Naive thymus-derived CD4-positive, alpha-beta T cell (primary cell): ENCODE measurements at regions of chr14 and their contacts with region 1.

Region 1: GRCh38 chr14:68816262-68816942 is 23.5 kb upstream of the ZFP36L1 start:
- DNase-seq: peak; percentile 77 to 93 (median 87)
- ATAC-seq: peak; percentile 92
- H3K4me3 ChIP-seq: peak overlapping the region; percentile 63
- H3K4me3 Mint-ChIP-seq: peak overlapping the region; percentile 82 to 95 (median 86)
- H3K27ac ChIP-seq: peak overlapping the region; percentile 95
- H3K27ac Mint-ChIP-seq: peak overlapping the region; percentile 93 to 100 (median 96)
- H3K4me1 ChIP-seq: peaks cover 59 to 62% of the 10 kb centered on the region in 2 donors
- H3K4me1 Mint-ChIP-seq: peaks cover 48 to 89% (median 66%) of the 10 kb centered on the region in 7 donors
- H3K27me3 ChIP-seq: no peaks in the 10 kb centered on the region
- H3K27me3 Mint-ChIP-seq: no peaks in the 10 kb centered on the region

Region 2: GRCh38 chr14:67816326-67817002 is 999.9 kb before region 1 on chr14 and contains the start of gene ZFYVE26:
- CTCF ChIA-PET with region 1: no interaction called
- POLR2A ChIA-PET with region 1: no interaction called
- intact Hi-C with region 1: loop called (anchors 5 kb)
- DNase-seq: peak; percentile 55 to 93 (median 87)
- ATAC-seq: peak; percentile 96
- H3K4me3 ChIP-seq: peak within 1 kb of the TSS; percentile 91
- H3K4me3 Mint-ChIP-seq: peak within 1 kb of the TSS; percentile 87 to 99 (median 98)
- H3K27ac ChIP-seq: peak within 1 kb of the TSS; percentile 76
- H3K27ac Mint-ChIP-seq: peak within 1 kb of the TSS; percentile 91 to 99 (median 98)
- H3K4me1 ChIP-seq: peaks cover 11 to 15% of the 10 kb centered on the region in 2 donors
- H3K4me1 Mint-ChIP-seq: peaks cover 24 to 73% (median 65%) of the 10 kb centered on the region in 7 donors
- H3K27me3 ChIP-seq: no peaks in the 10 kb centered on the region
- H3K27me3 Mint-ChIP-seq: no peaks in the 10 kb centered on the region
- total RNA-seq, gene ZFYVE26: 25.0 to 38.9 (median 31.1) TPM

Region 3: GRCh38 chr14:67943947-67944346 is 872.5 kb before region 1 on chr14:
- CTCF ChIA-PET with region 1: no interaction called
- POLR2A ChIA-PET with region 1: no interaction called
- intact Hi-C with region 1: loop called (anchors 1 kb)
- DNase-seq: peak in 7 of 9 donors; percentile 22 to 57 (median 49)
- ATAC-seq: peak; percentile 80
- H3K4me3 ChIP-seq: no peak overlapping the region
- H3K4me3 Mint-ChIP-seq: no peak overlapping the region
- H3K27ac ChIP-seq: no peak overlapping the region
- H3K27ac Mint-ChIP-seq: no peak overlapping the region
- H3K4me1 ChIP-seq: no peaks in the 10 kb centered on the region
- H3K4me1 Mint-ChIP-seq: peaks cover 0 to 2% (median 0%) of the 10 kb centered on the region in 7 donors
- H3K27me3 ChIP-seq: no peaks in the 10 kb centered on the region
- H3K27me3 Mint-ChIP-seq: no peaks in the 10 kb centered on the region

Region 4: DNA sequence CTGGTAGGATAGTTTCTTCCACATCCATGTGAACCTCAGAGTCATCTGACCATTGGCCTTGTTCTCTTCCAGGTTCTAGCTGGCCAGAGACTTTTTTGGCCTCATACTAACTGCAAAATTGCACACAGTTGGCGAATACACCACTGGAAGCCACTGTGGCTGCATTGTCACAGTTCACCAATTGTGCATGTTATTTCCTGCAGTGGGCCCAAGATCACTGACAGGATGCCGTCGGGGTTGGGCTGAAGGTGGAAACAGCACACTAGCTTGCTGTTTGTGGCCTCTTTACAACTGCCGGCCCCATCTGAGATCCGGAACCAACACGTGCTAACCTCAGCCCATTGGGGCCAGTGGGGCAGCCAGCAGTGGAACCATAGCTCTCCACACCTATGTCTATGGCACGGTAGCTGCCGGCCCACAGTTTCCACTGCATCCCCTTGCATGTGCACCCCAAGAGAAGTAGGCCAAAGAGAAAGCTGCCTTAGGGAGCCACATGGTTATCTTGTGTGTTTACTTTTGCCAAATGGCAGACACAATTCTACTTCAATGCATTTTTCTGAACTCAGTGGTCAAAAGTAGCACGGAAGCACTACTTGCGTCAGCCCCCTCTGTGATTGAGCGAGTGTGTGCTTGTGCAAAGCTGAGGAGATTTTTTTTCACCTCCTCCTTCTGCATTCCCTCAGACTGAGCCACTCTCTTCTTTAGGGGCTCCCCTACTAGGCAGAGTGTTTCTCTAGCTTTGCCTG is 532.9 kb before region 1 on chr14:
- CTCF ChIA-PET with region 1: interaction called, 7 read pairs
- POLR2A ChIA-PET with region 1: interaction called, 12 read pairs
- intact Hi-C with region 1: loop called (anchors 1 kb)
- DNase-seq: peak; percentile 20 to 70 (median 62)
- ATAC-seq: peak; percentile 78
- H3K4me3 ChIP-seq: peak overlapping the region; percentile 14
- H3K4me3 Mint-ChIP-seq: peak overlapping the region; percentile 44 to 86 (median 72)
- H3K27ac ChIP-seq: peak overlapping the region; percentile 74
- H3K27ac Mint-ChIP-seq: peak overlapping the region; percentile 93 to 99 (median 97)
- H3K4me1 ChIP-seq: peaks cover 36 to 70% of the 10 kb centered on the region in 2 donors
- H3K4me1 Mint-ChIP-seq: peaks cover 44 to 96% (median 86%) of the 10 kb centered on the region in 7 donors
- H3K27me3 ChIP-seq: no peaks in the 10 kb centered on the region
- H3K27me3 Mint-ChIP-seq: no peaks in the 10 kb centered on the region

Region 5: GRCh38 chr14:68418174-68419118 is 398.0 kb before region 1 on chr14:
- CTCF ChIA-PET with region 1: no interaction called
- POLR2A ChIA-PET with region 1: no interaction called
- intact Hi-C with region 1: no loop called
- DNase-seq: no peak
- ATAC-seq: no peak
- H3K4me3 ChIP-seq: no peak overlapping the region
- H3K4me3 Mint-ChIP-seq: no peak overlapping the region
- H3K27ac ChIP-seq: no peak overlapping the region
- H3K27ac Mint-ChIP-seq: no peak overlapping the region
- H3K4me1 ChIP-seq: peaks cover 0 to 9% of the 10 kb centered on the region in 2 donors
- H3K4me1 Mint-ChIP-seq: peaks cover 9 to 32% (median 19%) of the 10 kb centered on the region in 7 donors
- H3K27me3 ChIP-seq: no peaks in the 10 kb centered on the region
- H3K27me3 Mint-ChIP-seq: no peaks in the 10 kb centered on the region

Region 6: GRCh38 chr14:68506021-68506644 is 310.3 kb before region 1 on chr14:
- CTCF ChIA-PET with region 1: interaction called, 14 read pairs
- POLR2A ChIA-PET with region 1: interaction called, 31 read pairs
- intact Hi-C with region 1: loop called in 1 of 2 experiments (anchors 2 kb)
- DNase-seq: peak in 2 of 9 donors; percentile 13 to 14
- ATAC-seq: no peak
- H3K4me3 ChIP-seq: peak overlapping the region; percentile 19
- H3K4me3 Mint-ChIP-seq: peak overlapping the region; percentile 39 to 84 (median 78)
- H3K27ac ChIP-seq: peak overlapping the region; percentile 52
- H3K27ac Mint-ChIP-seq: peak overlapping the region in 8 of 9 donors; percentile 89 to 98 (median 93)
- H3K4me1 ChIP-seq: peaks cover 29 to 66% of the 10 kb centered on the region in 2 donors
- H3K4me1 Mint-ChIP-seq: peaks cover 28 to 93% (median 86%) of the 10 kb centered on the region in 7 donors
- H3K27me3 ChIP-seq: no peaks in the 10 kb centered on the region
- H3K27me3 Mint-ChIP-seq: no peaks in the 10 kb centered on the region

Region 7: GRCh38 chr14:68780358-68781160 is 35.8 kb before region 1 on chr14:
- CTCF ChIA-PET with region 1: interaction called, 25 read pairs
- POLR2A ChIA-PET with region 1: interaction called, 1,273 read pairs
- intact Hi-C with region 1: loop called in 1 of 2 experiments (anchors 5 kb)
- DNase-seq: peak in 5 of 9 donors; percentile 26 to 39 (median 33)
- ATAC-seq: peak; percentile 31
- H3K4me3 ChIP-seq: peak overlapping the region; percentile 57
- H3K4me3 Mint-ChIP-seq: peak overlapping the region; percentile 74 to 87 (median 84)
- H3K27ac ChIP-seq: peak overlapping the region; percentile 65
- H3K27ac Mint-ChIP-seq: peak overlapping the region; percentile 82 to 94 (median 92)
- H3K4me1 ChIP-seq: peaks cover 62 to 68% of the 10 kb centered on the region in 2 donors
- H3K4me1 Mint-ChIP-seq: peaks cover 39 to 90% (median 82%) of the 10 kb centered on the region in 7 donors
- H3K27me3 ChIP-seq: no peaks in the 10 kb centered on the region
- H3K27me3 Mint-ChIP-seq: no peaks in the 10 kb centered on the region

Region 8: DNA sequence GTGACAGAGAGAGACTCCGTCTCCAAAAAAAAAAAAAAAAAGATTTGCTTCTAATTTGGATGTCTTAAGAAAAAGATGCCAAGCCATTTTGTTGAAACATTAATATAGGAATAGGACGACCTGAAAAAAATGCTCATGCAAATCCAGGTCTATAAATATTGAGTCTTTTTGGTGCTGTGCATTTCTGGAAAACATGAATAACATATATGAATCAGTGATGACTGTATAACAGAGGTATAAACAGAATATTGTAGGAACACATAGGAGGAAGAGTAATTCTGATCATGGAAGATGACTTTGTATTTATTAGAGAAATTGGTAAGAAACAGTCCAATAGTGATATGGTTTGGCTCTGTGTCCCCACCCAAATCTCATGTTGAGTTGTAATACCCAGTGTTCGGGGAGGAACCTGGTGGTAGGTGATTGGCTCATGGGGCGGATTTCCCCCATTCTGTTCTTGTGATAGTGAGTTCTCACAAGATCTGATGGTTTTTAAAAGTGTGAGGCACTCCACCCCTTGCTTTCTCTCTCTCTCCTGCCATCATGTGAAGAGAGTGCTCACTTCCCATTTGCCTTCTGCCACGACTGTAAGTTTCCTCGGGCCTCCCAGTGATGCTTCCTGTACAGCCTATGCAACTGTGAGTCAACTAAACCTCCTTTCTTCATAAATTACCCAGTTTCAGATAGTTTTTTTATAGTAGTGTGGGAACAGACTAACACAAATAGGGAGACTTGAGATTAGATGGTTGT is 947.5 kb after region 1 on chr14:
- CTCF ChIA-PET with region 1: no interaction called
- POLR2A ChIA-PET with region 1: no interaction called
- intact Hi-C with region 1: no loop called
- DNase-seq: no peak
- ATAC-seq: no peak
- H3K4me3 ChIP-seq: no peak overlapping the region
- H3K4me3 Mint-ChIP-seq: peak overlapping the region in 1 of 10 donors; percentile 29
- H3K27ac ChIP-seq: no peak overlapping the region
- H3K27ac Mint-ChIP-seq: peak overlapping the region in 7 of 9 donors; percentile 49 to 100 (median 62)
- H3K4me1 ChIP-seq: peaks cover 17 to 28% of the 10 kb centered on the region in 2 donors
- H3K4me1 Mint-ChIP-seq: peaks cover 32 to 68% (median 58%) of the 10 kb centered on the region in 7 donors
- H3K27me3 ChIP-seq: no peaks in the 10 kb centered on the region
- H3K27me3 Mint-ChIP-seq: peaks cover 0 to 4% (median 0%) of the 10 kb centered on the region in 5 donors